ENCODE measurements at regions of chr5 and their contacts with region 1.

Region 1: GRCh38 chr5:150700594-150701293 is at the start of gene RBM22:
- DNase-seq: peak; percentile 84
- ATAC-seq: peak; percentile 95
- H3K4me3 Mint-ChIP-seq: no peak within 1 kb of the TSS
- H3K27ac Mint-ChIP-seq: no peak within 1 kb of the TSS
- H3K4me1 Mint-ChIP-seq: peaks cover 6% of the 10 kb centered on the region
- H3K27me3 Mint-ChIP-seq: no peaks in the 10 kb centered on the region
- CTCF ChIP-seq: no peak
- total RNA-seq, gene RBM22: 74.0 and 74.1 TPM in 2 replicates

Region 2: DNA sequence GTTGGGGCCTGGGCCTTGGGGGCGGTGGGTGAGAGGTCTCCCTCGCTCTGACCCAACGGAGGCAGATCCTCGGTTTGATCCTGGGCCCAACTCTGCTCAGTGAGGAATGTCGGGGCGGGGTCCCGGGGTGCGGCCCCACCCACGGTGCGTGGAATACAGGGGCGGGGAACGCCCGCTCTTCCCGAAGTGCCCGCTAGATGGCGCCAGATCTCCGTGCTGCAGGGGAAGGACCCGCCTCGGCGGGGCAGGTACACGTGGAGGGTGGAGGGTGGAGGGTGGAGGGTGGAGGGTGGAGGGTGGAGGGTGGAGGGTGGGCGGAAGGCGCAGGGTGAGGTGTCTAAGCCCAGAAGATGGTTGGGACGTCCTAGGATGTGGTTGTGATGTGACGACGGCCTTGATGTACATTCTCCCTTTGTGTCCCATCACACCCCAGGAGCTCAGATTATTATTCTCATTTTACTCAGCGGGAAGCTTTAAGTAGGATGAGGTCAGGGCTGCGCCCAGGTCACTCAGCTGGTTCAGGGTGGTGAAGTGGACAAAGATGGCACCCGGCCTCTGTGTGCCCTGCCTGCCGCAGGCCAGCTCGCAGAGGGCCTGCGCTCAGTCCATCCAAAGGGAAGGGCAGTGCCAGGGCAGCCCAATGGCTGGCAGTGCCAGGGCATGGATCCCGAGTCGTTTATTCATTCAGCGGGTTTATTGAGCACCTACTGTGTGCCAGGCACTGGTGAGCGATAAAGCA is 241.8 kb before region 1 on chr5:
- CTCF ChIA-PET with region 1: interaction called, 4 read pairs
- POLR2A ChIA-PET with region 1: interaction called, 4 read pairs
- intact Hi-C with region 1: loop called (anchors 2 kb)
- DNase-seq: peak; percentile 90
- ATAC-seq: peak; percentile 94
- H3K4me3 Mint-ChIP-seq: peak overlapping the region; percentile 58
- H3K27ac Mint-ChIP-seq: peak overlapping the region; percentile 50
- H3K4me1 Mint-ChIP-seq: peaks cover 44% of the 10 kb centered on the region
- H3K27me3 Mint-ChIP-seq: no peaks in the 10 kb centered on the region
- CTCF ChIP-seq: no peak

Region 3: DNA sequence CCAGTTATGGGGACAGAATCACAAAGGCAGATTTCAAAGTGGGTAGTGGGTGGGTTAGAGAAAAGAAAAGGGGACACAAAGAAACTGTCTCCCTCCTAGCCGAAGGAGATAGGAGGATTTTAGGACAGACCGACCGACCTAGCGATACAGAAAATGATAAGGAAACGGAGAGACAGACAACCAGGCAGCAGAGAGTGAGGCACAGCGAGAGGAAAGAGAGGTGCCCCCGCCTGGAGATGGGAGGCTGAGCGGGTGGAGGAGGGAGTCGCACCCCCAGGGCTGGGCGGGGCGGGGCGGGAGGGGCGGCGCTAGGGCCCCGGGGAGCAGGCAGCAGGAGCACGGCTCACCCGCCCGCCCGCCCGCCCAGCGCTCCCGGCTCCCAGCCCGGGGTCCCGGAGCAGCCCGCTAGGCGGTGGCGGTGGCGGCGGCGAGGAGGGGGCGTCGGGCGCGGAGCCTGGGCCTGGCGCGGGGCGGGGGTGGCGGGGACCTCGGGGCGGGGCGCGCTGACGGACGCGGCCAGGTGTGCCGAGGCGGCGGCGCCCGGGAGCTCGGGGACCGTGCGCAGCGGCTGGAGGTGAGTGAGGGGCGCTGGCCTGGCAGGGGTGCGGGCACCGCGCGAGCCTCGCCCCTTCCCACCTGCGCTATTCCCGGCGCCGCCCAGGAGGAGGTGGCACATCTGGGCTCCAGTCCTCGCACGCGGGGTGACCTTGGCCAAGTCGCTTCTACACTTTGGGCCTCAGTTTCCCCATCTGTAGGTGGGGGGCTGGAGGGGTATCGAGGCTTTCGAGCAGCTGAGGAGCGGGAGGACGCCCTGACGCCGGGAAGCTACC is 76.2 kb before region 1 on chr5:
- CTCF ChIA-PET with region 1: no interaction called
- POLR2A ChIA-PET with region 1: interaction called, 10 read pairs
- intact Hi-C with region 1: loop called (anchors 2 kb)
- DNase-seq: peak; percentile 44
- ATAC-seq: peak; percentile 23
- H3K4me3 Mint-ChIP-seq: peak overlapping the region; percentile 94
- H3K27ac Mint-ChIP-seq: peak overlapping the region; percentile 76
- H3K4me1 Mint-ChIP-seq: peaks cover 57% of the 10 kb centered on the region
- H3K27me3 Mint-ChIP-seq: no peaks in the 10 kb centered on the region
- CTCF ChIP-seq: no peak

Region 4: DNA sequence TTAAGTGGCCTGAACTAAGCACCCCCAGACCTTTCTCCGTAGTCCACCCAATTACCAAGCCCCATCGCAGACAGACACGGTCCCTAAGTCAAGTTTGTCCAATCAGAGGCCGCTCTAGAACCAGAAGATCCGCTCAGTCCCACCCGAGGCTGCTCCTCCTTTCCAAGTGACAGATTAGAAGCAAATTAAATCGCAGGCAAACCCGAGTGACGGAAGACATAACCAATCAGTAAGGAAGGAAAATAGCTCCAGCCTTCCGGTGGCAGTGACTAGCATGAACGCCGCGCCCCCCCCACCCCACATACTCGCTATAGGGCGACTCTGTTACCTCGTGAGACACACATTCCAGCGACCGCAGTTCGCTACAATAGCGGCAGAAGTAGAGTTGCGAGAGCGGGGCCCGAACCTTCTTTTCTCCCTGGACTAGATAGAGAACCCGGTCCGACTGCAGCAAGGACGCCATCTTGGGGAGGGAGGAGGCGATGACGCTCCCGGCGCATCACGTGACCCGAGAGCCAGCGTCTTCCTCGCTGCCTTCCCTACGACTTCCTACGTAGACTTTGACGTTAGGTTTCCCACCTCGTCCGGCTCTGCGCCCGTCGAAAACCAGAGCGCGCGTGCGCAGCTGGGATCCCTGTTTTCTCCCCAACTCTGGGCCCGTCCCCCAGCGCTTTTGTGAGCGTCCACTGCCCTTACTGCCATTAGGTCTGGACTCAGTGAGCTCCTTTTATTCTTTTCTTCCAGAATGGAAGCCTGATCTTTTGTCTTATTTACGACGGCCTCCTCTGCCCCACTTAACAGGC is 58.0 kb after region 1 on chr5 and contains the start of gene DCTN4:
- CTCF ChIA-PET with region 1: no interaction called
- POLR2A ChIA-PET with region 1: interaction called, 21 read pairs
- intact Hi-C with region 1: loop called (anchors 1 kb)
- DNase-seq: peak; percentile 87
- ATAC-seq: peak; percentile 93
- H3K4me3 Mint-ChIP-seq: no peak within 1 kb of the TSS
- H3K27ac Mint-ChIP-seq: no peak within 1 kb of the TSS
- H3K4me1 Mint-ChIP-seq: peaks cover 17% of the 10 kb centered on the region
- H3K27me3 Mint-ChIP-seq: peaks cover 9% of the 10 kb centered on the region
- CTCF ChIP-seq: no peak
- total RNA-seq, gene DCTN4: 49.0 and 49.8 TPM in 2 replicates

Region 5: DNA sequence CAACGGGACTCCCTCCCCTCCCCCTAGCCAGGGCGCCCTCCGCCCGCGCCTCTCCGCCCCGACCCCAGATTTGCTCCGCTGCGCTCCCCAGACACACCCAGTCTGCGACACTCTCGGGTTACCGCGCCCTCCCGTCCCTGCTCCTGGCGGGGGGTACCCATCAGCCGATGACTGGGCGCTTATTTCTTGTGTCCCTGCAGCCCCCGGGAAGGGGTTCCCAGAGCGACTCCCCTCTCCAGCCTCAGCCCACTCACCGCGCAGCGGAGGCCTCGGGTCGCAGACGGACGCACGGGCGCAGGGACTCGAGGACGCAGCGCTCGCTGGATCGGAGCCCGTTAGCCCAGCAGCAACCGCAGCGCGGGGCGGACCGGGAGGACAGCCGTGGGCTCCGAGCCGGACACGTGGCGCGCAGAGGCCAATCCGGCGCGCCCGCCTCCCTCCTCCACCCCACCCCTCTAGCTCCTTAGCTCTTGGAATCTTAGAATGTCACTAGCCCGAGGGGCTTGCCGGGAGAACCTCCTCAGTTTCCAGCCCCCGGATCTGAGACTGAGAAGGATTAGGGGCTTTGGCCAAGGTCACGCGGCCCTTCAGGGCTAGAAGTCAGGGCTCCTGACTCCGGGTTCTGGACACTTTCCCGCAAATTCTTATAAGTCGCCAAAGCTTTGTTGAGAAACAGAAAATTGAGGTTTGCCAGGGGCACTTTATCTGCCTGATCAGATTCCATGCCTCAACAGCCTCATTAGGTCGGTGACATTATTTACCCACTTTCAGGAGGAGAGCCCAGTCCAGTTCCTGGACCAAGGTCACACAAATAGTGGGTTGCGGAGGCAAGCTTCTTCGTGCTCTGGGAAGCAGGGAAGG is 456.9 kb after region 1 on chr5 and contains the start of gene ANXA6:
- CTCF ChIA-PET with region 1: no interaction called
- POLR2A ChIA-PET with region 1: no interaction called
- intact Hi-C with region 1: loop called (anchors 5 kb)
- DNase-seq: peak; percentile 62
- ATAC-seq: peak; percentile 72
- H3K4me3 Mint-ChIP-seq: peak within 1 kb of the TSS; percentile 91
- H3K27ac Mint-ChIP-seq: peak within 1 kb of the TSS; percentile 94
- H3K4me1 Mint-ChIP-seq: peaks cover 77% of the 10 kb centered on the region
- H3K27me3 Mint-ChIP-seq: no peaks in the 10 kb centered on the region
- CTCF ChIP-seq: no peak
- total RNA-seq, gene ANXA6: 367 and 379 TPM in 2 replicates